Activated T-helper 2 cell treated with anti-CD3 and anti-CD28 coated beads, Interferon-gamma antibody, Interleukin-2, Interleukin-4, amounts not matched to agents 10 μg/mL and 5 μg/mL and 100 μg/mL, durations not matched to agents 14 hours and 24 hours and 36 hours (primary cell): ENCODE measurements at regions of chr20 and their contacts with region 1.

Region 1: DNA sequence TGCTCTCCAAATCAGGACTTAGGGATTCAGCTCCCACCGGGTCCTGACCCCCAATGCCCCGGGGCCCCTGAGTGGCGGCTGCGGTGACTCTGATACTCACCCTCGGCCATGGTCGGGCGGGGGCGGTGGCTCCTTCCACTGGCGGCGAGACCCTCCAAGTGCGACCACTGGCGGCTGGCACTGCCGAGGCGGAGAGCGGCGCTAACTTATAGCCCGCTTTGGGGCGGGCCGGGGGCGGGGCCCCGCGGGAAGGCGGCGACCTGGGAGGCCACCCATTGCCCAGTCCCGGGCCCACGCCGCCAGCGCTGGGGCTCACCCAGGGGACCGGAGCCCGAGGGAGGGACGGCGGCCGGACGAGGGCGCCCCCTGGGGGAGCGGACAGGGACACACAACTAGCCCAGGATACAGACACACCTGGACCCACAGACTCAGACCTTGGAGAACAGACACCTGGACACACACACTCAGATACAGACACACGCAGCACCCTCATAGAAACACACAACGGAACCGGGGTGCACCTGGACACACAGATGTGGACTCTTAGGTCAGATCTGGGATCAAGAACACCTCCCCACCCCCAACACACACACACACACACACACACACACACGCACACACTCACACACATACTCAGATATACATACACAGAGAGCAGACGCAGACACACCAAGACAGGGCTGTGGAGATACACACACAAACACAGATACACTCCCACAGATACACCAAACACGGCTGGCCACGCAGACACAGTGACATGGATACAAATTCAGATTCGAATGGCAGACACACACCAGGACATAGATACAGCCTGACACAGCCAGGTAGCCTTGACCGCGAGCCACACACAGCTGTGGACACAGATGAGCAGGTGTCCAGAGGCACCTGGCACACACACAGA is at the start of gene TGM2:
- DNase-seq: peak; percentile 32
- H3K4me3 Mint-ChIP-seq: no peak within 1 kb of the TSS
- H3K27ac Mint-ChIP-seq: no peak within 1 kb of the TSS
- H3K4me1 Mint-ChIP-seq: peaks cover 11% of the 10 kb centered on the region
- H3K27me3 Mint-ChIP-seq: peaks cover 18% of the 10 kb centered on the region
- total RNA-seq, gene TGM2: not detected in 2 replicates

Region 2: DNA sequence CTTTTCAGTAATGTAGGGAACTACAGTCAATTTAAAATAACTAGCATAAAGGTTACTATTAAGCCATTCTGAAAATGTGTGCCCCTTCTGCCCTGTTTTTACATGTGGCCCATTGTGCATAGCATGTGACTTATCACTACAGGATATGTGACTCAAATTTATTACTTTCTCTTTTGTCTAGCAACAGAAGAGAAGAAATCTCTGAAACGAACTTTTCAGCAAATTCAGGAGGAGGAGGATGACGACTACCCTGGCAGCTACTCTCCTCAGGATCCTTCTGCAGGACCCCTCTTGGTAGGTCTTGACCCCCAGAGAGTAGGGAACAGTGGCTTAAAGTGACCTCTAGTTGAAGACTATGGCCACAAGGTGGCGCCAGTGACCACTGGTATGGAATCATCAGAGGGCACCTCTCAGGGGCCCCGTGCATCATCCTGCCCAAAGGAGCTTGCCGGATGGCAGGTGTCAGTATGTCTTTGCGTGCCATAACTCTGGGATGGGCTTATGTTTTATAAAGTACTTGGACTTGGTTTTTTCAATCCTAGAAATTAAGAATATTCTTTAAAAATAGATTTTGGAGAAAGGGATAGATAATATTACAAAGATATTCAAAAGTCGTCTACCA is 107.9 kb before region 1 on chr20:
- intact Hi-C with region 1: loop called (anchors 1 kb)
- DNase-seq: peak; percentile 50
- H3K4me3 Mint-ChIP-seq: no peak overlapping the region
- H3K27ac Mint-ChIP-seq: peak overlapping the region; percentile 79
- H3K4me1 Mint-ChIP-seq: peaks cover 35% of the 10 kb centered on the region
- H3K27me3 Mint-ChIP-seq: no peaks in the 10 kb centered on the region

Region 3: DNA sequence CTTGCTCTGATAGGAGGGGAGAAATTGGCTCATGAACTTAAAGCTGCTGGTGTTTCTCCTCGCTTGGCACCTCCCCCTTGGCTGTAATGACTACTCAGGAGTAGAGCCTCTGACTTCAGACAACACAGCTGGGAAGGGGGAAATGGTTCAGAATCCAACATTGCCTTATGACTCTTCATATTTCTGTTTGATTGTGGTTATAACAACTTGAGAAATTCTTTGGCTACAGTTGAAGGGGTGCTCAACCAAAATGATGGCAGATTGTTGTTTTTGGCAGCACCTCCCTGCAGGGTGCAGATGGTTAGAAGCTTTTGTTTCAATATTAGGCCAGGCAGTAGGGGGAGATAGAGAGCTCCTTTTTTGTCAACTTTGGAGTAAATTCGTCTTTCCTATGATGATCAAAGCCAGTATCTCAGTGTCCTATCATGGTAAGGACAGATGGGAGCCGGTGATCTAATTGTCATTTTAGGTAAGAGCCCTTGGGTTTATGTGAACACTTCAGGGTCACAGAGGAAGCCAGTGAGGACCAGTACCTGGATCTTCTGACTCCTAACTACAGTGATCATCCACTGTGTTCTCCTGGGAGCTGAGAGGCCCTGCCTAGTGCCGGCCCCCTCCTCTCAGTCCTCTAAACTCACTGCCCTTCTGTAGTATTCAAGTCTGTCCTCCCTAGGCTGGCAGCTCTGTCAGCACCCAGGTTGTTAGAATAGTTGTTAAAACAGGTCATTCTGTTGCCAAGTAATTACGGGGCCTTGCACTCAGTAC is 91.8 kb before region 1 on chr20:
- intact Hi-C with region 1: loop called (anchors 1 kb)
- DNase-seq: no peak
- H3K4me3 Mint-ChIP-seq: no peak overlapping the region
- H3K27ac Mint-ChIP-seq: no peak overlapping the region
- H3K4me1 Mint-ChIP-seq: peaks cover 3% of the 10 kb centered on the region
- H3K27me3 Mint-ChIP-seq: no peaks in the 10 kb centered on the region

Region 4: DNA sequence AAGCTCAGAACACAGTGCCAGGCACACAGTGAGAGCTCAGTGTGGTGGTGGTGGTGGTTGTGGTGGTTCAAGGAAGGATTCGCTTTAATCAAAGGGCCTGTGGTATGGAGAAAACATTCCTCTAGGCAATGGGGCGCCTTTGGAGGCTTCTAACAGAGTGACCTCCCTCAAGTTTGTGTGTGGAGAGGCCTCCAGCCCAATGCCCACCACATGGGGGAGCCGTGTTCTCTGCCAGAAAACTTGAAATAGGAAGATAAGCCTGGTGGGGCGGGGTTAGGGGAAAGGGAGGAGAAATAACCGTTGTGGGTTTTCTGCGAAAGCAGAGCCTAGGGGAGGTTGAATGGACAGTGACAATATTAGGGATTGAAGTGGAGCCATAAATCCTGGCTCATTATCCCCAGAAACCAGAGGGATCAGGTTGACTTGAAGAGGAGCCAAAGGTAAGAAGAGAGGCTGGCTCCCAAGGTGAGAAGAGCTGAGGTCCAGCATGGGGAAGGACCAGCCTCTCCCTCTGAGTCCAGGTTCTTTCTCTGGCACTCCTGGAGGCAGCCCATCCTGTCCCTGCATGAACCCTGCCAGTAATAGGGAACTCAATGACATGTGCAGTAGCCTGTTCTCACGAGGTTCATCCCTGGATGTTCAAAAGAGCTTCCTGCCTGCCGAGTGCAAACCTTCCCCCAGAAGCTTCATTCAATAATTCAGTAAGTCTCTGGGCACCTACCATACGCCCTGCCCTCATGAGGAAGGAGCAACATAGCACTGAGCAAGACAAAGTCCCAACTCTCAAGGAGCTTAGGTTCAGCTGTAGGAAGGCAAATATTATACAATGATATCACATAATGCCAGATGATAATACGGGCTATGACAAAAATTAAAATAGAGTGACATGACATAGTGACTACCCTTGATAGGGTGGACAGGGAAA is 51.7 kb before region 1 on chr20:
- intact Hi-C with region 1: loop called (anchors 1 kb)
- DNase-seq: peak; percentile 18
- H3K4me3 Mint-ChIP-seq: no peak overlapping the region
- H3K27ac Mint-ChIP-seq: no peak overlapping the region
- H3K4me1 Mint-ChIP-seq: peaks cover 3% of the 10 kb centered on the region
- H3K27me3 Mint-ChIP-seq: peaks cover 19% of the 10 kb centered on the region

Region 5: DNA sequence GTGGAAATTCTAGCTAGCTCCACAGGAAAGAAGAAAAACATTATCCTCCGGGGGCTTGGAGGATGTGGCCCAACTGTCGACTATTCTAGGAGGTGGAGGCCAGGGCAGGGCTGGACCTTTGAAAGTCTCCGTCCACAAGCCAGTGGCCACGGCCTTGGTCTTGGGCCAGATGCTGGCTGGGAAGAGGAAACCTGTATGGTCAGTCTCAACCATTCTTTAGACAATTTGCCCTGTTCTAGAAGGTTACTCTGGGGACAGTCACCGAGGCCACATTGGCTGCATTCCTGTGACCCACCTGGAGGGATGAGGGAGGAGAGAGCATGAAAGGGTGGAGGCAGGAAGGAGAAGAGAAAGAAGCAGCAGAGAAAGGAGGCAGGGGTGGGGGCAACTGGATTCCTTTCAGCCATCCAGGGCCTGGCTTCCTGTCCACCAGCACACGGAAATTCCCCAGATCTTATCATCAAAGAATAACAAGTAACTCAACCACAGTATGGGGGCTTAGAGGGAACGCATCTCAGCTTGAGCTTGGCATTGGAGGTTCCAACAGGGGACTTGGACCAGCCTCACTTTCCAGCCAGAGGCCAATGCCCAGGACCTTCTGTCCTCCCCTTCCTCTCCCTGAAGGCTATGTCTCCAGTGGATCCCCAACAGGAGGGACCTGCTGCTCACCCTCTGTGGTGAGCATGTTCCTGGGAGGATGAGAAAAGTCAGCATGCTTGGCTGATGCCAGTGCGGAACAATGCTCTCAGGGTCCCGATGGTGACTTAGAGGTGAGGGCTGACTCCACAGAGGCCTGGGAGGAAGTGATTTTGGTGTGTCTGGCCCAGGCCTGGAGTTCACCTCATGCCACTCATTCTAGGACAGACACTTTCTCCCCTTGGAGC is 30.7 kb before region 1 on chr20:
- intact Hi-C with region 1: loop called (anchors 1 kb)
- DNase-seq: no peak
- H3K4me3 Mint-ChIP-seq: no peak overlapping the region
- H3K27ac Mint-ChIP-seq: peak overlapping the region; percentile 71
- H3K4me1 Mint-ChIP-seq: peaks cover 12% of the 10 kb centered on the region
- H3K27me3 Mint-ChIP-seq: no peaks in the 10 kb centered on the region

Region 6: GRCh38 chr20:38181207-38181693 is 15.9 kb after region 1 on chr20:
- intact Hi-C with region 1: no loop called
- DNase-seq: no peak
- H3K4me3 Mint-ChIP-seq: no peak overlapping the region
- H3K27ac Mint-ChIP-seq: no peak overlapping the region
- H3K4me1 Mint-ChIP-seq: no peaks in the 10 kb centered on the region
- H3K27me3 Mint-ChIP-seq: peaks cover 9% of the 10 kb centered on the region